Prostate gland (tissue), 2 donors: ENCODE measurements at regions of chr11 and their contacts with region 1.

Region 1: DNA sequence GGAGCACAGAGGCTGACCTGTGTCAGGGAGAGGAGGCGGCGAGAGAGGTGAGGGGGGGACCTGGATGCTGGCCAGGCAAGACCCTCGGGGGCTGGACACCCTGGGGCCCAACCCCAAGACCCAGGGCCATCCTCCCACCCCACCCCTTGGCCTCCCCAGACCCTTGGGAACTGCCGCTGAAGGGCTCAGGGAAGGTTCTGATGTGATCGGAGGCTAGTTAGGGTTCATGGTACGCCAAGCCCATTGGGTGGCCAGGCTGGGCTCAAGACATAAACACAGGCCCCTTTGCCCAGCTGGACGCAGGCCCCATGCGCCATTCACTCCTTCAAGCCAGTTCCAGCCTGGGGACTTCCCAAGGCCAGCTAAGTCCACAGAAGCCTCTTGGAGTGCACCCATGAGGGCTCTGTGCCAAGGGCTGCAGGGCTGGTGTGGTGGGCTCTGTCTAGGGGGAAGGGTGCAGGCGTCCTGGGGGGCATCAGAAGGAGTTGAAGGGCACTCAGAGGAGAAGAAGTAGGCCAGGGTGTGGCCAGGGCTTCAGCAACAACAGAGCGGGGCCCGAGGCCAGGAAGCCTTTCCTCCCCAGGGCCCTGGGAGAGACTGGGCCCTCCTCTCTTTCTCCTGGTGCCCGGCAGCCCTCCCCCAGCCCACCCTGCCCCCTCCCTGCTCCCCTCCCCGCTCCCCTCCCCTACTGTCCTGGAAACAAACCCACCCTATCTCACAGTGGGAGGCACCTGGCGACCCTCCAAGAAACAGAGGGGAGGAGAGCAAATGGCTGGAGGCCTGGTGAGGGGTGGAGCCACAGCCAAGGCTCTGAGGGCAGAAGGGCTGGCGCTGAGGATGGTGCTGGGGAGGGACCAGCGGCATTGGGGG is 12.9 kb downstream of the TSPAN32 start:
- DNase-seq: peak; percentile 71
- H3K4me3 ChIP-seq: no peak overlapping the region
- H3K27ac ChIP-seq: peak overlapping the region; percentile 62 to 68
- H3K4me1 ChIP-seq: peaks cover 8% of the 10 kb centered on the region
- H3K27me3 ChIP-seq: no peaks in the 10 kb centered on the region
- CTCF ChIP-seq: no peak
- POLR2A ChIP-seq: peak; percentile 37

Region 2: GRCh38 chr11:2377511-2378443 is 63.0 kb after region 1 on chr11:
- intact Hi-C with region 1: loop called (anchors 2 kb)
- DNase-seq: peak; percentile 73
- H3K4me3 ChIP-seq: peak overlapping the region; percentile 93 to 100
- H3K27ac ChIP-seq: peak overlapping the region; percentile 97 to 98
- H3K4me1 ChIP-seq: peaks cover 29% of the 10 kb centered on the region
- H3K27me3 ChIP-seq: no peaks in the 10 kb centered on the region
- CTCF ChIP-seq: no peak
- POLR2A ChIP-seq: peak; percentile 71

Region 3: DNA sequence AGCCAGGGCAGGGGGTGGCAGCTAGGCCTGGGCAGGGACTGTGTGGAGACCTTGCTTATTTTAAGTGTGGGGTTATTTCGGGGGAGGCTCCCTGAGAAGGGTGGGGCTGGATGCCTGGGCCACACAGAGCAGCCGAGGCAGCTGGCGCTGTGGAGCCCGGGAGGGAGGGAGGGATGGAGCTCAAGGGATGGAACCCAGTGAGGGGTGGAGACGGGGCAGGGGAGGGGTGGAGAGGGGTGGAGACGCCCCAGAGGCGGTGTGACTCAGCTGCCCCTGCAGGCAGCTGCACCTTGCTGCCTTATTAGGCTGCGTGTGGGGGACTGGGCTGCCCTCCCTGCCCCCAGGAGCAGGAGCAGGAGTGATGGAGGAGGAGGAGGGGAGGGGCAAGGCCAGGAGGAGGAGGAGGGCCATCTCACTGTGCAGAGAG is 76.0 kb after region 1 on chr11:
- intact Hi-C with region 1: no loop called
- DNase-seq: no peak
- H3K4me3 ChIP-seq: no peak overlapping the region
- H3K27ac ChIP-seq: peak overlapping the region; percentile 58 to 71
- H3K4me1 ChIP-seq: peaks cover 33% of the 10 kb centered on the region
- H3K27me3 ChIP-seq: no peaks in the 10 kb centered on the region
- CTCF ChIP-seq: no peak
- POLR2A ChIP-seq: no peak

Region 4: GRCh38 chr11:2526808-2527381 is 212.1 kb after region 1 on chr11:
- intact Hi-C with region 1: loop called (anchors 5 kb)
- DNase-seq: no peak
- H3K4me3 ChIP-seq: no peak overlapping the region
- H3K27ac ChIP-seq: no peak overlapping the region
- H3K4me1 ChIP-seq: no peaks in the 10 kb centered on the region
- H3K27me3 ChIP-seq: no peaks in the 10 kb centered on the region
- CTCF ChIP-seq: peak in 2 of 4 experiments; percentile 5 to 51
- POLR2A ChIP-seq: no peak